PC-3 (cell line): ENCODE measurements at regions of chr11 and their contacts with region 1.

Region 1: GRCh38 chr11:101436511-101437142 is 147.2 kb downstream of the TRPC6 start:
- DNase-seq: peak; percentile 77
- ATAC-seq: peak; percentile 67
- H3K4me3 ChIP-seq: no peak overlapping the region
- H3K27ac ChIP-seq: no peak overlapping the region
- H3K4me1 ChIP-seq: peaks cover 3% of the 10 kb centered on the region; the same call in 1 of the 2 replicates
- H3K27me3 ChIP-seq: no peaks in the 10 kb centered on the region
- CTCF ChIP-seq: peak; percentile 95

Region 2: DNA sequence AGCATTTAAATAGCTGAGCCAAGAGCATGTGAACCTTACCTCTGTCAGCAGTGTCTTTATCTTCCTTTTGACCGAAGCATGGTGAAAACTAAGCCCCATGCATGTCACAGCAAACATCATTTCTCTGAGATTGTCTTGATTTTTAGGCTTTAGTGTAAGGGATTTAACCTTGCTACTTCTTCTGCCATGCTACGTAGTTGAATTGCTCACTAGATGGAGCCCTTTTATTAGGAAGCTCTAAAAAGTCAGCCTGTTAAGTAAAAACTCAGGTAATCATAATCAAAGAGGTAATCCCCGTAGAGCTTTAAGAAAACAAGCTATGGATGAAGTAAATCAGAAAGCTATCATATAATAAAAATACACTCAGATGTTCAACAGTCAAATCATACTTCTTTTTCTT is 456.5 kb before region 1 on chr11:
- CTCF ChIA-PET with region 1: no interaction called
- POLR2A ChIA-PET with region 1: no interaction called
- intact Hi-C with region 1: loop called (anchors 2 kb)
- DNase-seq: peak; percentile 56
- ATAC-seq: 0 out of 2 replicates have a peak, but pooled peaks have one; percentile 40
- H3K4me3 ChIP-seq: no peak overlapping the region
- H3K27ac ChIP-seq: no peak overlapping the region
- H3K4me1 ChIP-seq: peaks cover 9% of the 10 kb centered on the region
- H3K27me3 ChIP-seq: no peaks in the 10 kb centered on the region
- CTCF ChIP-seq: peak; percentile 75

Region 3: GRCh38 chr11:101348786-101349185 is 87.8 kb before region 1 on chr11:
- CTCF ChIA-PET with region 1: no interaction called
- POLR2A ChIA-PET with region 1: no interaction called
- intact Hi-C with region 1: no loop called
- DNase-seq: no peak
- ATAC-seq: no peak
- H3K4me3 ChIP-seq: no peak overlapping the region
- H3K27ac ChIP-seq: no peak overlapping the region
- H3K4me1 ChIP-seq: no peaks in the 10 kb centered on the region
- H3K27me3 ChIP-seq: peaks cover 55% of the 10 kb centered on the region
- CTCF ChIP-seq: no peak

Region 4: DNA sequence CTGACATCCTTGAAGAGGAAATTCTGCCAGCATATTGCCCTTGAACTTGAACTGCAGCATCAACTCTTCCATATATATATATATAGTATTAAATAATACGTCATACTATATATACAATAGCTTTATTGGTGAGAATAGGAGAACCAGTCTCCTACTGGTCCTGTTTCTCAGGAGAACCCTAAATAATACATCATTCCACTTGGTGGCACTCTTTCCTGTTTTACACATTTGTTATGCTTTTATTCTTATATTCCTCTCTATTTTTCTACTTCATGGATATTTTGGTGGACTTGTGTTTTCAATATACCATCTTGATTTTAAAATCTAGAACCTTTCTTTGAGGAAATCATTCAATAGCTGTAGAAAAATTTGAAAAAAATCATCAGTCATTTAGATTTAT is 46.1 kb before region 1 on chr11:
- CTCF ChIA-PET with region 1: interaction called, 4 read pairs
- POLR2A ChIA-PET with region 1: no interaction called
- intact Hi-C with region 1: loop called (anchors 1 kb)
- DNase-seq: peak; percentile 53
- ATAC-seq: peak; percentile 57
- H3K4me3 ChIP-seq: no peak overlapping the region
- H3K27ac ChIP-seq: no peak overlapping the region
- H3K4me1 ChIP-seq: no peaks in the 10 kb centered on the region
- H3K27me3 ChIP-seq: peaks cover 22% of the 10 kb centered on the region; the same call in 1 of the 2 replicates
- CTCF ChIP-seq: peak; percentile 48

Region 5: DNA sequence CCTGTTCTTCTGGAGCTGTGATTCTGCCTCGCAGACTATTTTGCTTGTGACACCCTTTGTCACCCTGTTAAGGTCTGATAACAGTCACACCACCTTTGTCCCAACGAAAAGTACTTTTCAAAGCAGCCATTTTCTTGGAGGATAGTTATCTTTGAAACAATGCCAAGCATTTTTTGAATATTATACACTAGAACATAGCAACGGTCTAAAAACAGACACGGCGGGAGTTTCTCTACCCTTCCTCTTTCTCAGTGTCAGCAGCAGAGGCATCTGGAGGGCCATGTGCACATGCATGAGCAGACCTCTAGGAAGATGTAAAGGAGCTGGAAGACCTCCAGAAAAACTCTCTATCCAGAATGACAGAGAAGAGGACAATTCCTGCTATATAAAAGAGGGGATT is 60.7 kb after region 1 on chr11:
- CTCF ChIA-PET with region 1: no interaction called
- POLR2A ChIA-PET with region 1: no interaction called
- intact Hi-C with region 1: no loop called
- DNase-seq: no peak
- ATAC-seq: no peak
- H3K4me3 ChIP-seq: no peak overlapping the region
- H3K27ac ChIP-seq: no peak overlapping the region
- H3K4me1 ChIP-seq: no peaks in the 10 kb centered on the region
- H3K27me3 ChIP-seq: peaks cover 10% of the 10 kb centered on the region; the same call in 1 of the 2 replicates
- CTCF ChIP-seq: no peak